ENCODE measurements at regions of chr16 and their contacts with region 1.

Region 1: DNA sequence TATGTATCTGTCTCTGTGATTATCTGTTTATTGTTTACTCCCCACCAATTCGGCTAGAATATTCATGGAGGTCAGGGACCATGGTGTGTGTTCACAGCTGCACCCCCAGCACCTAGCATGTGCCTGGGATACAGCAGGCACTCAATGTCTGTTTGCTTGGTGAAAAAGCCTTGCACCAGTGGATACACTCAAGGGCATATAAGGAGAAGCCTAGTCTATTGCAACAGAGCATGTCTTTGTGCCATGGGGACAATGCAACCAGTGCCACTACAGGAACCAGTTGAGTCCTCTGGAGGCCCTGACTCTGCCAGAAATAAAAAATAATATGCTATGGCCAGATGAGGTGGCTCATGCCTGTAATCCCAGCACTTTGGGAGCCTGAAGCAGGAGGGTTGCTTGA is 93.6 kb downstream of the NDE1 start:
- DNase-seq: no peak
- CTCF ChIP-seq: no peak

Region 2: GRCh38 chr16:15708096-15708495 is 35.6 kb before region 1 on chr16:
- CTCF ChIA-PET with region 1: no interaction called
- POLR2A ChIA-PET with region 1: no interaction called
- DNase-seq: no peak
- CTCF ChIP-seq: no peak

Region 3: GRCh38 chr16:15721018-15721417 is 22.6 kb before region 1 on chr16:
- CTCF ChIA-PET with region 1: no interaction called
- POLR2A ChIA-PET with region 1: no interaction called
- DNase-seq: no peak
- CTCF ChIP-seq: no peak

Region 4: GRCh38 chr16:15757630-15758251 is 14.1 kb after region 1 on chr16:
- CTCF ChIA-PET with region 1: interaction called, 17 read pairs
- POLR2A ChIA-PET with region 1: interaction called, 3 read pairs
- DNase-seq: no peak
- CTCF ChIP-seq: no peak